ENCODE measurements at regions of chr4 and their contacts with region 1.

Region 1: GRCh38 chr4:183261953-183262775 is 57.9 kb downstream of the CLDN22 start:
- DNase-seq: peak; percentile 69 to 90 (median 80)
- ATAC-seq: peak; percentile 90
- H3K4me3 ChIP-seq: no peak overlapping the region
- H3K4me1 ChIP-seq: peaks cover 8% of the 10 kb centered on the region
- CTCF ChIP-seq: peak; percentile 56

Region 2: GRCh38 chr4:182938205-182938645 is 323.9 kb before region 1 on chr4:
- intact Hi-C with region 1: loop called (anchors 5 to 10 kb)
- DNase-seq: peak; percentile 70 to 83 (median 79)
- ATAC-seq: peak; percentile 98
- H3K4me3 ChIP-seq: no peak overlapping the region
- H3K4me1 ChIP-seq: no peaks in the 10 kb centered on the region
- CTCF ChIP-seq: peak; percentile 76

Region 3: DNA sequence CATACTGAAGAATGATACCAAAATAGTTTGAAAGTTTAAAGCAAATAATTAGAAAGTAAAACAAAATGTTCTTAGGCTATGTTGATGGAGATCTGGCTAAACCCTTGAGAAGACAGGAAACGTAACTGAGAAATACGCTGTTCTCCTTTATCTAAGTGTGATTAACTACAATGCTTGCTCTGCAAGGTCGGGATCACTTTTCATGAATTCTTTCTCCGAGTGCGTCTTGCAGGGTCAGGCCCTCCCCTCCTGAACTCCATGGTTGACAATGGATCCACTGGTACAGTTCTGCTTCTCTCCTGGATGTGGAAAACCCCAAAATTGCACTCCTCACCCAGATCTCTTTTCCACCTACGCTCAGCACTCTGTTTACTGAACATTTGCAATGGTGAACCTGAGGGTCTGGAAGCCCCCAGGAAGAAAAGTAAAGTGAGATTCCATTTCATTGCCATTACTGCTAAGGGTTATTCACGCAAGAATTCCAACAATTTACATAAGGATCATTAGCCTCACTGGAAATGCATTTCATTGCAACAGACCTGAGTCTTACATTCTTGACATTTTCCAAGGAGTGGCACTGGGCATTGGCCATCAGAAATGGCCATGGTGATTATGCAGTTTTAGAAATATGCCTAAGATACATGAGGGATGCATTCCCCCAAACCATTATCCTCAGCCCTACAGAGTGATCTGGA is 187.7 kb before region 1 on chr4:
- intact Hi-C with region 1: loop called (anchors 5 kb)
- DNase-seq: no peak
- ATAC-seq: no peak
- H3K4me3 ChIP-seq: no peak overlapping the region
- H3K4me1 ChIP-seq: no peaks in the 10 kb centered on the region
- CTCF ChIP-seq: no peak

Region 4: GRCh38 chr4:183471946-183472708 is 210.0 kb after region 1 on chr4:
- intact Hi-C with region 1: no loop called
- DNase-seq: peak; percentile 67 to 98 (median 81)
- ATAC-seq: peak; percentile 89
- H3K4me3 ChIP-seq: no peak overlapping the region
- H3K4me1 ChIP-seq: no peaks in the 10 kb centered on the region
- CTCF ChIP-seq: peak; percentile 47

Region 5: DNA sequence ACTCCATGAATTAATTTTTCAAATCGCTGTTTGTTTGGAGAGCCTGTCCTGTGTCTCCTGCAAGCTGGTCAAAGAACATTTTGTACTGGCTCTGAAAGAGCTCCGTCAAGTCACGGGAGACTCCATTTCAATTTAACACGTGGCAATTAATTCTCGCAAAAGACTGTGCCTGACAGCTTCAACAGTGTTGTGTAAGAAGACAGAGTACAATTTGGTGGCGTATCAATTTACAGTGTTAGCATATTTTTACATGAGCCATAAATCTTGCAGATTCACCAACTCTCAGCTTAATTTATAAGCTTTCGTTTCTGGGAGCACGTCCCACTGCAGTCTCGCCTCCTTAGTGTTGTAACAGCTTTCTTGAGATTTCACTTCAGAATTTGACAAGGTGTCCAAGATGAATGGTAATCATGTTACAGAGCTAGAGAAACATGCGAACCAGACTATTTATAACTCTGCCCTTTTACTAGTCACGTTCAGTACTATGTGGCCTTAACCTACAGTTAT is 326.1 kb after region 1 on chr4:
- intact Hi-C with region 1: no loop called
- DNase-seq: no peak
- ATAC-seq: peak; percentile 28
- H3K4me3 ChIP-seq: no peak overlapping the region
- H3K4me1 ChIP-seq: no peaks in the 10 kb centered on the region
- CTCF ChIP-seq: no peak